WTC11 (cell line): ENCODE measurements at regions of chr9 and their contacts with region 1.

Region 1: GRCh38 chr9:19464764-19465585 is 56.2 kb downstream of the ACER2 start:
- DNase-seq: peak; percentile 82
- ATAC-seq: peak; percentile 92
- H3K4me3 Mint-ChIP-seq: peak overlapping the region; percentile 74
- H3K27ac Mint-ChIP-seq: no peak overlapping the region
- H3K4me1 Mint-ChIP-seq: peaks cover 3% of the 10 kb centered on the region
- H3K27me3 Mint-ChIP-seq: peaks cover 9% of the 10 kb centered on the region; the same call in 1 of the 2 replicates
- CTCF ChIP-seq: peak; percentile 89

Region 2: GRCh38 chr9:18847576-18848275 is 617.2 kb before region 1 on chr9:
- CTCF ChIA-PET with region 1: no interaction called
- POLR2A ChIA-PET with region 1: no interaction called
- DNase-seq: no peak
- ATAC-seq: no peak
- H3K4me3 Mint-ChIP-seq: no peak overlapping the region
- H3K27ac Mint-ChIP-seq: no peak overlapping the region
- H3K4me1 Mint-ChIP-seq: no peaks in the 10 kb centered on the region
- H3K27me3 Mint-ChIP-seq: no peaks in the 10 kb centered on the region; the same call in 1 of the 2 replicates
- CTCF ChIP-seq: no peak

Region 3: GRCh38 chr9:19048966-19049916 is 415.7 kb before region 1 on chr9 and contains the start of gene RRAGA:
- CTCF ChIA-PET with region 1: interaction called, 58 read pairs
- POLR2A ChIA-PET with region 1: no interaction called
- DNase-seq: peak; percentile 95
- ATAC-seq: peak; percentile 89
- H3K4me3 Mint-ChIP-seq: peak within 1 kb of the TSS; percentile 87
- H3K27ac Mint-ChIP-seq: peak within 1 kb of the TSS; percentile 97
- H3K4me1 Mint-ChIP-seq: peaks cover 40% of the 10 kb centered on the region
- H3K27me3 Mint-ChIP-seq: no peaks in the 10 kb centered on the region
- CTCF ChIP-seq: peak; percentile 80
- total RNA-seq, gene RRAGA: 48.0 to 50.1 TPM (median 48.7 TPM) in 3 replicates

Region 4: GRCh38 chr9:19174127-19174912 is 290.7 kb before region 1 on chr9:
- CTCF ChIA-PET with region 1: interaction called, 10 read pairs
- POLR2A ChIA-PET with region 1: no interaction called
- DNase-seq: peak; percentile 30
- ATAC-seq: peak; percentile 95
- H3K4me3 Mint-ChIP-seq: no peak overlapping the region
- H3K27ac Mint-ChIP-seq: no peak overlapping the region
- H3K4me1 Mint-ChIP-seq: peaks cover 5% of the 10 kb centered on the region
- H3K27me3 Mint-ChIP-seq: no peaks in the 10 kb centered on the region
- CTCF ChIP-seq: peak; percentile 30; the same call in 1 of the 2 replicates

Region 5: GRCh38 chr9:19408693-19409400 is 56.1 kb before region 1 on chr9 and contains the start of gene ACER2:
- CTCF ChIA-PET with region 1: interaction called, 19 read pairs
- POLR2A ChIA-PET with region 1: interaction called, 3 read pairs
- DNase-seq: peak; percentile 98
- ATAC-seq: peak; percentile 91
- H3K4me3 Mint-ChIP-seq: peak within 1 kb of the TSS; percentile 98
- H3K27ac Mint-ChIP-seq: peak within 1 kb of the TSS; percentile 97
- H3K4me1 Mint-ChIP-seq: peaks cover 19% of the 10 kb centered on the region
- H3K27me3 Mint-ChIP-seq: peaks cover 17% of the 10 kb centered on the region
- CTCF ChIP-seq: no peak
- total RNA-seq, gene ACER2: 8.1 to 9.5 TPM (median 8.8 TPM) in 3 replicates

Region 6: DNA sequence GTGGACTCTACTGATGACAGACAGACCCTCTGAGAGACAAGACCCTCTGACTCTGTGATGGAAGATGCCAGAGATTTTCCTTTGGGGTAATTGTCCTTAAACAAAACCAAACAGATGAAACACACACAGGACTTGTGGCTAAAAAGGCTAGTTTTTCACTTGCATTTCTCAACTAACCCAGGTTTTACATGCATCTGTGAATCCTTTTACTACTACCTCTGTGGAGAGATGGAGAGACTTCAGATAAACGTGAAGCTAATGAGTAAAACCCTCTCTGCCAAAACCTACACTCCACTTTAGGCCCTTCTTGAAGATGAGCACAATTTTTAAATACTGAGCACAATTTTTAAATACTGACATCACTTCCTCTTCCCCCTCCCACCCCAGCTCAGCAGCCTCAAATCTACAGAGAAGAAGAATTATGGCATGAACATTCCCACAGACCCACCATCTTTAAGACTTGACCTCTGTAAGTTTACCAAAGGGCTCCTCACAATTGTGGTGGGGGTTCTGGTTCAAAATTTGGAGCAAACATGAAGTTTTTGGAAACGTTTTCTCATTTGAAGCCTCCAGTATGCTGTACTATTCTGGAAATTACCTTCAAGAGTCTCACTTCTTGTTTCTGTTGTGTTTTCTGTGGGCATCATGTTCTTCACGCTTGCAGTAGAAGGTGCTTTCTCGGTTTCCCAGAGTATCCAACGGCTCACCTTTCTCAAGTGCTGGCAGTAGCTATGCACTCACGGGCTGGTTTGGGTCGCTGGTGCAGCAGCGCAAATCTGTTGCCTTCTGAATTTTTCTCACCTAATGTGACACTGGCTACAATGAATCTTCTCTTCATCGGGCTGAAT is 13.5 kb before region 1 on chr9:
- CTCF ChIA-PET with region 1: interaction called, 57 read pairs
- POLR2A ChIA-PET with region 1: interaction called, 3 read pairs
- DNase-seq: no peak
- ATAC-seq: no peak
- H3K4me3 Mint-ChIP-seq: no peak overlapping the region
- H3K27ac Mint-ChIP-seq: peak overlapping the region; percentile 41; the same call in 1 of the 2 replicates
- H3K4me1 Mint-ChIP-seq: peaks cover 36% of the 10 kb centered on the region
- H3K27me3 Mint-ChIP-seq: no peaks in the 10 kb centered on the region
- CTCF ChIP-seq: no peak

Region 7: DNA sequence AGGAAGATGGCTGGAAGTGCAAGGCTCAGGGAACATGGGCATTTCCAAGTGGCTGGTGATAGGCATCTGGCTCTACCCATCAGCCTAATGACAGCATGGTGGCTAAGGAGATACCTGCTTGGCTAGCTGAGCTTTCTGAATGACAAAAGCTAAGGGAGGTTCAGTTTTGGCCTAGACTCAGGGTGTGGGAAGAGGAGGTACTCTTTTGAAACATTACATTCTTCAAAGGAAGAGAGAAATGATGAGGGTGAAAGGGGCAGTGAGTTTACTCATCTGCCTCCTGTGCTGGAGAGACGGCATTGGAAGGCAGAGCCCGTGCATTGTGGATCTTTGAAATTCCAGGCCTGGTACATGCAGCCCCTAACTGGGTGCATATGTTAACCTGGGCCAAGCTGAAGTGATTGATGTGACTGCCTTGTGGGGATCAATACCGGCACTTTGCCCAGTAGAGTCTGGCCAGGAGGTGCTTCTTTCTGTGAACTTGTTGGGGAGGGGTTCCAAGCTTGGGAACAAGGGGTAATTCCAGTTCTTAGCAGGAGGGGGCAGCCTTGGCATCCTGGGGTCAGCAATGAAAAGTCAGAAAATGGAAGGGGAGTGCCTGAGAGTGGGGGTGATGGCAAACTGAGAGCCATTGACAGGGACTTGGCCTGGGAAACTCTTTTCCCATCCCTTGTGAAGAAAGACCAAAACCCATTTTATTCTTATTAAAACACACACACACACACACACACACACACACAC is 52.4 kb after region 1 on chr9:
- CTCF ChIA-PET with region 1: interaction called, 16 read pairs
- POLR2A ChIA-PET with region 1: no interaction called
- DNase-seq: peak; percentile 78
- ATAC-seq: peak; percentile 94
- H3K4me3 Mint-ChIP-seq: no peak overlapping the region
- H3K27ac Mint-ChIP-seq: no peak overlapping the region
- H3K4me1 Mint-ChIP-seq: peaks cover 13% of the 10 kb centered on the region
- H3K27me3 Mint-ChIP-seq: no peaks in the 10 kb centered on the region
- CTCF ChIP-seq: peak; percentile 49

Region 8: DNA sequence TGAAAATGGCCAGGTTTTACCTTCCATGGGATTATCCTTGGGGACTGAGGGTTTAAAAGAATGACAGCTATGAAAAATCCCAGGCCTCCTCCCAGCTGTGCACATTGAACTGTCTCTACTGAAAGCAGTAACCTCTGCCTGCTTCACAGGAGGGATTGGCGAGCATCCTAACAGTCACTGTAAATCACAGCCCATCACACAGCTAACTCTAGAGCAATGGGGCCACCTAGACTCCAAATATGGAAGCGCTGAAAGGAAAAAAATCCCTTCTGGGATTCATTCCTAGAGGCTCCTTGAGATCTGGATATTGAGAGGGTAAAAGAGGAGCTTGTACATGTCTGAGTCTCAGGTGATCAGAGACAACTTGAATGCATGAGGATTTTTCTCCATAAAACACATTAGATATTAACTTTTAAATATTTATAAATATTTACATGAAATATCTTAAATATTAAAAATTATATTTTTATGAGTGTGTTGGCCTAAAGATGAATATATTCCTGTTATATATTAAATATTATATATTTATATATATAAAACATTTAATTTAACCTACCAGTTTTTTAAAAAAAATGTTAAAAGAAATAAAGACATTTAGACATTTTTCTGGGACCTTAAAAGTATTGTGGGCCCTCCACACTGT is 457.6 kb after region 1 on chr9:
- CTCF ChIA-PET with region 1: interaction called, 31 read pairs
- POLR2A ChIA-PET with region 1: no interaction called
- DNase-seq: peak; percentile 44
- ATAC-seq: peak; percentile 77
- H3K4me3 Mint-ChIP-seq: no peak overlapping the region
- H3K27ac Mint-ChIP-seq: no peak overlapping the region
- H3K4me1 Mint-ChIP-seq: peaks cover 32% of the 10 kb centered on the region
- H3K27me3 Mint-ChIP-seq: peaks cover 6% of the 10 kb centered on the region
- CTCF ChIP-seq: peak; percentile 40; the same call in 1 of the 2 replicates